ENCODE measurements at regions of chr3 and their contacts with region 1.

Region 1: GRCh38 chr3:48548729-48549705 is 7.6 kb downstream of the PFKFB4 start:
- DNase-seq: peak; percentile 93
- ATAC-seq: peak; percentile 96

Region 2: GRCh38 chr3:48273594-48274211 is 275.3 kb before region 1 on chr3:
- intact Hi-C with region 1: loop called (anchors 5 kb)
- DNase-seq: no peak
- ATAC-seq: peak; percentile 60

Region 3: DNA sequence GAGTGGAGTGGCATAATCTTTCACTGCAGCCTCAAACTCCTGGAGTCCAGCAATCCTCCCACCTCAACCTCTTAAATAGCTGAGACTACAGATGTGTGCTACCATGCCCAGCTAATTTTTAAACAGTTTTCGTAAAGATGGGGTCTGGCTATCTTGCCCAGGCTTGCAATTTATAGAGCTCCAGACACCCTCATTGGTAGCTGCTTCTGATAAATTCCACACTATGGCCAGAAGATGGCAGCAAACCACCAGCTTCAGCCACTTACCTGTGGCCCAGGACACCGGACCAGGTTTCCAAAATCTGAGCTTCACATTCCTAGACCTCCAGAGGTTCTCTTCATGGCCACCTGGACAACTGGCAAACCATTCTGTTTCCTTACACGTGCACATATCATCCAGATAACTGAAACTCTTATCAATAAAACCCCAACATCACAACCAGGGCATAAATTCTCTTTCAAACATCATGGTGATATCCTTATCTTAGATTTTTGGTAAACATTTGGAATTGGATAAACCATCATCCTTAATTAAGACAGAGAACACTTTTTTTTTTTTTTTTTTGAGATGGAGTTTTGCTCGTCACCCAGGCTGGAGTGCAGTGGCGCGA is 148.1 kb before region 1 on chr3:
- intact Hi-C with region 1: loop called (anchors 5 kb)
- DNase-seq: no peak
- ATAC-seq: peak; percentile 77

Region 4: GRCh38 chr3:48465531-48466378 is 83.3 kb before region 1 on chr3:
- intact Hi-C with region 1: loop called (anchors 2 kb)
- DNase-seq: peak; percentile 97
- ATAC-seq: peak; percentile 92

Region 5: DNA sequence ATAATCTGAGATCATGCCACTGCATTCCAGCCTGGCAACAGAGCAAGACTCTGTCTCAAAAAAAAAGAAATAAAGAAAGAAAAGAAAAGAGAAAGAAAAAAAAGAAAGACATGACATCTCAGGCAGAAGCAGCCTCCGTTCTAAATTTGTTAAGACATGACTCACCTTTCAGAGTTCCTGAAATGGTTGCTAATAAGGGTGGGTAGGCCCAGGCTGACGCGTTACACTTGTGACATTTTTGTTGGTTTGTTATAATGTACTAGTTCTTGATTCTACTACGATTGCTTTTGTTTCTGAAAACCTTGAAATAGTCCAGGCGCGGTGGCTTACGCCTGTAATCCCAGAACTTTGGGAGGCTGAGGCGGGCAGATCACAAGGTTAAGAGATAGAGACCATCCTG is 328.7 kb after region 1 on chr3:
- intact Hi-C with region 1: no loop called
- DNase-seq: no peak
- ATAC-seq: no peak